ENCODE measurements at regions of chr6 and their contacts with region 1.

Region 1: GRCh38 chr6:36885461-36886401 is at the start of gene C6orf89:
- DNase-seq: peak; percentile 97 to 99
- ATAC-seq: peak; percentile 100
- H3K4me3 ChIP-seq: peak within 1 kb of the TSS; percentile 75 to 92 (median 83)
- H3K27ac ChIP-seq: peak within 1 kb of the TSS; percentile 83 to 91 (median 90)
- H3K4me1 ChIP-seq: peaks cover 24 to 25% of the 10 kb centered on the region in 2 donors
- H3K27me3 ChIP-seq: no peaks in the 10 kb centered on the region
- CTCF ChIP-seq: peak; percentile 85 to 95 (median 91)
- POLR2A ChIP-seq: peak; percentile 80 to 94
- total RNA-seq, gene C6orf89: 30.8 to 53.2 (median 38.8) TPM

Region 2: GRCh38 chr6:36451391-36451790 is 434.3 kb before region 1 on chr6:
- in situ Hi-C with region 1: no loop called
- intact Hi-C with region 1: no loop called
- DNase-seq: no peak
- ATAC-seq: no peak
- H3K4me3 ChIP-seq: no peak overlapping the region
- H3K27ac ChIP-seq: no peak overlapping the region
- H3K4me1 ChIP-seq: peaks cover 0 to 6% of the 10 kb centered on the region in 2 donors
- H3K27me3 ChIP-seq: no peaks in the 10 kb centered on the region
- CTCF ChIP-seq: no peak
- POLR2A ChIP-seq: no peak

Region 3: GRCh38 chr6:36929607-36930006 is 43.9 kb after region 1 on chr6:
- in situ Hi-C with region 1: no loop called
- intact Hi-C with region 1: loop called (anchors 2 kb)
- DNase-seq: peak in 1 of 2 donors; percentile 54
- ATAC-seq: peak; percentile 47 to 55
- H3K4me3 ChIP-seq: no peak overlapping the region
- H3K27ac ChIP-seq: peak overlapping the region; percentile 72 to 89 (median 80)
- H3K4me1 ChIP-seq: peaks cover 38 to 40% of the 10 kb centered on the region in 2 donors
- H3K27me3 ChIP-seq: no peaks in the 10 kb centered on the region
- CTCF ChIP-seq: no peak
- POLR2A ChIP-seq: no peak

Region 4: DNA sequence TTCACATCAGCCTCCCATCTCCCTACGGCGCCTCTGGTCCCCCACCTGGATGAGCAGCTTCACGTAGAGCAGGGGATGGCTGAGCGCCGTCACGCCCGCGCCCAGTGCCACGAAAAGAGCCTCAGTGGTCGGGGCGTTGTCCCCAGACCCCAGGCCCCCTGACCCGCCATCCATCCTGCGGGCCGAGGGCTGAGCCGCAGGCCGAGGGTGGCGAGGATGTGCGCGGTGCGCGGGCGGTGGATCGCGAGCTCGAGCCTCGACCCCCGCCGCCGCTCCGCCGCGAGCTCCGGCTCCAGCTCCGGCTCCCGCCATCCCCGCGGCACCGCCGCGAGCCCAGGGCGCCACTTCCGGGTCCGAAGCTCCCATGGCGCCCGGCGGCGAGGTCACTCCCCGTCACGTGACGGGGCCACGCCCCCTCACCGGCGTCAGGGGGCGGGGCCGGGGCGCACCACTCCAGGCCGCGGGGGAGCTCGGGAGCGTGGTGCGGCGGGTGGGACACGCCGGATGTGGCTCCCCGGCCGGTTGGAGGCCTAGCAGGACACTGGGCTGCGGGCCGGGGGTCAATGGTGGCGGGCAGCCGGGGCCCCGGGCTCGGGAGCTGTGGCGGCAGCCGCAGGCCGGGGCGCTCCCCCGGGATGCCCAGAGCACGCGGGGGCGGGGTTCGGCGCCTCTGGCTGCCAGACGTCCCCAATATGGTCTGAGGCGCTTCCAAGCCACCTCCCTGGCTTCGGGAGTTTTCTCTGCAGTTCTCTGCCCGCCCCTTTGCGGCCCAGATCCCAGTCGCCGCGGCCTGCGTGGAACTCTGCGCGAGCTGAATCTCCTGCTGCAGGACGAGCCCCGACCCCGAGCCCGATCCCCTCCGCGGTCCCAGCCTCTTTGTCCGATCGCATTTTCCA is 100.3 kb after region 1 on chr6 and contains the start of gene MTCH1:
- in situ Hi-C with region 1: loop called in 1 of 4 experiments (anchors 10 kb)
- intact Hi-C with region 1: no loop called
- DNase-seq: peak; percentile 84 to 88
- ATAC-seq: peak; percentile 95 to 96
- H3K4me3 ChIP-seq: peak within 1 kb of the TSS; percentile 96 to 99 (median 98)
- H3K27ac ChIP-seq: peak within 1 kb of the TSS; percentile 92 to 99 (median 96)
- H3K4me1 ChIP-seq: peaks cover 33 to 37% of the 10 kb centered on the region in 2 donors
- H3K27me3 ChIP-seq: no peaks in the 10 kb centered on the region
- CTCF ChIP-seq: peak in 2 of 5 experiments; percentile 29 to 34
- POLR2A ChIP-seq: peak; percentile 97 to 98
- total RNA-seq, gene MTCH1: 85.6 to 127 (median 116) TPM

Region 5: GRCh38 chr6:37169496-37170272 is 284.0 kb after region 1 on chr6 and contains the start of gene PIM1:
- in situ Hi-C with region 1: no loop called
- intact Hi-C with region 1: loop called (anchors 5 kb)
- DNase-seq: peak; percentile 98 to 99
- ATAC-seq: peak; percentile 68 to 70
- H3K4me3 ChIP-seq: peak within 1 kb of the TSS; percentile 69 to 97 (median 90)
- H3K27ac ChIP-seq: peak within 1 kb of the TSS; percentile 92 to 95 (median 93)
- H3K4me1 ChIP-seq: peaks cover 13 to 27% of the 10 kb centered on the region in 2 donors
- H3K27me3 ChIP-seq: no peaks in the 10 kb centered on the region
- CTCF ChIP-seq: no peak
- POLR2A ChIP-seq: peak; percentile 96
- total RNA-seq, gene PIM1: 5.0 to 23.0 (median 13.0) TPM

Region 6: GRCh38 chr6:37222125-37222967 is 336.6 kb after region 1 on chr6:
- in situ Hi-C with region 1: loop called (anchors 10 to 25 kb)
- intact Hi-C with region 1: no loop called
- DNase-seq: peak in 1 of 2 donors; percentile 60
- ATAC-seq: peak; percentile 81 to 82
- H3K4me3 ChIP-seq: peak overlapping the region; percentile 55 to 73 (median 67)
- H3K27ac ChIP-seq: peak overlapping the region in 1 of 4 donors; percentile 6
- H3K4me1 ChIP-seq: peaks cover 9 to 15% of the 10 kb centered on the region in 2 donors
- H3K27me3 ChIP-seq: no peaks in the 10 kb centered on the region
- CTCF ChIP-seq: no peak
- POLR2A ChIP-seq: no peak

Measured in gastrocnemius medialis (tissue), 4 donors.